ENCODE measurements at regions of chr18 and their contacts with region 1.

Region 1: GRCh38 chr18:50866765-50867164 is 12.2 kb upstream of the ME2 start:
- DNase-seq: peak; percentile 38
- H3K4me3 ChIP-seq: no peak overlapping the region
- H3K27ac ChIP-seq: no peak overlapping the region
- H3K4me1 ChIP-seq: peaks cover 8% of the 10 kb centered on the region
- CTCF ChIP-seq: peak; percentile 60

Region 2: GRCh38 chr18:50638884-50639420 is 227.8 kb before region 1 on chr18:
- CTCF ChIA-PET with region 1: no interaction called
- POLR2A ChIA-PET with region 1: no interaction called
- intact Hi-C with region 1: no loop called
- DNase-seq: no peak
- H3K4me3 ChIP-seq: no peak overlapping the region
- H3K27ac ChIP-seq: no peak overlapping the region
- H3K4me1 ChIP-seq: no peaks in the 10 kb centered on the region
- CTCF ChIP-seq: no peak

Region 3: GRCh38 chr18:50662177-50662576 is 204.6 kb before region 1 on chr18:
- CTCF ChIA-PET with region 1: no interaction called
- POLR2A ChIA-PET with region 1: no interaction called
- intact Hi-C with region 1: loop called (anchors 5 kb)
- DNase-seq: peak; percentile 17
- H3K4me3 ChIP-seq: no peak overlapping the region
- H3K27ac ChIP-seq: no peak overlapping the region
- H3K4me1 ChIP-seq: no peaks in the 10 kb centered on the region
- CTCF ChIP-seq: peak; percentile 68